IMR-90 (cell line): ENCODE measurements at regions of chr2 and their contacts with region 1.

Region 1: DNA sequence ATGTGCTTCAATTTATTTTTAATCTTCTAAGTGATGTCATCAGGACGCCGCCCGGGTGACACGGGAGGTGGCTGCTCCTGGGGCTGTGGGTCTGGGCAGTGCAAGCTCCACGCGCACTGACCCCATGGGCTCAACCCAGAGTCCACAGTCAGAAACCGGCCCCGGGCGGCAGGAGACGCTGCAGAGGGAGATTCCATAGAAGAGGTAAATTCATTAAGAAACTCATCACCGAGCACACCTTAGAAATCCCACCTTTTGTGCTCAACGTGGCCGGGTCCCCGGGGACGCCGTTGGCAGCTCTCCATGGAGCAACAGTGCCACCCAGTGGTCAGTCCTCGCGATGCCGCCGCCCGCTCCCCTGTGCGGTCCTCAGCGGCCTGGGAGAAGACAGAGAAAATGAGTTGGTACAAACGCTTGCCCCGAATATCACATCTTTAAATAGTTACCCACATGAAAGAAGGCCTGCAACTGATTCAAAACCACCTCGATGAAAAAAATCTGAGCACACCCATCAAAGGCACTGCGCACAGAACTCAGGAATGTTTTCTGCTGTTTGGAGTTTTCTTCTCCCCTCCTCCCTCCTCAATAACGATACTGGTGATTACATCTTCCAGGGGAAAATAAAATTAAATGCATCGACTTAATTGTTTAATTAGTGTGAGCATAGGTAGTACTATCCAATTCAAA is 92.6 kb downstream of the CMPK2 start:
- DNase-seq: peak; percentile 11
- ATAC-seq: peak; percentile 95
- H3K4me3 ChIP-seq: no peak overlapping the region
- H3K27ac ChIP-seq: no peak overlapping the region
- H3K4me1 ChIP-seq: no peaks in the 10 kb centered on the region
- H3K27me3 ChIP-seq: no peaks in the 10 kb centered on the region; the same call in 1 of the 2 replicates
- CTCF ChIP-seq: peak; percentile 93
- POLR2A ChIP-seq: 0 out of 2 replicates have a peak, but pooled peaks have one; percentile 25
- RAD21 ChIP-seq: peak; percentile 97

Region 2: GRCh38 chr2:6186332-6187151 is 586.6 kb before region 1 on chr2:
- CTCF ChIA-PET with region 1: no interaction called
- POLR2A ChIA-PET with region 1: no interaction called
- dilution Hi-C with region 1: no loop called
- in situ Hi-C with region 1: no loop called
- intact Hi-C with region 1: loop called (anchors 10 kb)
- DNase-seq: peak; percentile 87
- ATAC-seq: peak; percentile 92
- H3K4me3 ChIP-seq: no peak overlapping the region
- H3K27ac ChIP-seq: peak overlapping the region; percentile 41; the same call in 1 of the 2 replicates
- H3K4me1 ChIP-seq: peaks cover 11% of the 10 kb centered on the region
- H3K27me3 ChIP-seq: no peaks in the 10 kb centered on the region
- CTCF ChIP-seq: no peak
- POLR2A ChIP-seq: no peak
- RAD21 ChIP-seq: no peak

Region 3: GRCh38 chr2:6482256-6482655 is 290.9 kb before region 1 on chr2:
- CTCF ChIA-PET with region 1: no interaction called
- POLR2A ChIA-PET with region 1: no interaction called
- dilution Hi-C with region 1: no loop called
- in situ Hi-C with region 1: no loop called
- intact Hi-C with region 1: no loop called
- DNase-seq: no peak
- ATAC-seq: no peak
- H3K4me3 ChIP-seq: no peak overlapping the region
- H3K27ac ChIP-seq: no peak overlapping the region
- H3K4me1 ChIP-seq: no peaks in the 10 kb centered on the region
- H3K27me3 ChIP-seq: no peaks in the 10 kb centered on the region
- CTCF ChIP-seq: no peak
- POLR2A ChIP-seq: no peak
- RAD21 ChIP-seq: no peak

Region 4: DNA sequence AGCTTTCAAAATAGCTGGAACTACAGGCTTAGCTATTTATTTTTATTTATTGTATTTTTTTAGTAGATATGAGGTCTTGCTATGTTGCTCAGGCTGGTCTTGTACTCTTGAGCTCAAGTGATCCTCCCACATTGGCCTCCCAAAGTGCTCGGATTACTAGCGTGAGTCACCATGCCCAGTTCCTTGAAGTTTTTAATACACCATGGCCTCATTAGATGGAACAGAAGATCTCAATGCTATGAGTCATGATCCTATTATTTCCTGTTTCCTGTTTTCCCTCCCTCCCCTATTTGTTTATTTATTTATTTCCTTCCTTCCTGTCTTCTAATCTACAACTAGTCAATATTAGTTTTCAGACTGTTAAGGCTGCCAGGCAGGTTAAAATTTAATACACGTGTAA is 216.4 kb before region 1 on chr2:
- CTCF ChIA-PET with region 1: no interaction called
- POLR2A ChIA-PET with region 1: no interaction called
- dilution Hi-C with region 1: no loop called
- in situ Hi-C with region 1: no loop called
- intact Hi-C with region 1: no loop called
- DNase-seq: peak; percentile 71
- ATAC-seq: peak; percentile 70
- H3K4me3 ChIP-seq: no peak overlapping the region
- H3K27ac ChIP-seq: no peak overlapping the region
- H3K4me1 ChIP-seq: no peaks in the 10 kb centered on the region; the same call in 1 of the 2 replicates
- H3K27me3 ChIP-seq: no peaks in the 10 kb centered on the region
- CTCF ChIP-seq: no peak
- POLR2A ChIP-seq: no peak
- RAD21 ChIP-seq: no peak